ENCODE measurements at regions of chr14 and their contacts with region 1.

Region 1: GRCh38 chr14:35121887-35122695 is at the starts of genes PPP2R3C and PRORP:
- DNase-seq: peak; percentile 88
- H3K4me3 Mint-ChIP-seq: peak within 1 kb of the TSS; percentile 96
- H3K27ac Mint-ChIP-seq: peak within 1 kb of the TSS; percentile 100
- H3K4me1 Mint-ChIP-seq: peaks cover 41% of the 10 kb centered on the region
- H3K27me3 Mint-ChIP-seq: no peaks in the 10 kb centered on the region
- total RNA-seq, gene PPP2R3C: 48.1 and 49.7 TPM in 2 replicates
- total RNA-seq, gene PRORP: 37.0 and 41.3 TPM in 2 replicates

Region 2: GRCh38 chr14:34629657-34630529 is 492.2 kb before region 1 on chr14 and contains the start of gene SNX6:
- intact Hi-C with region 1: loop called (anchors 10 kb)
- DNase-seq: peak; percentile 78
- H3K4me3 Mint-ChIP-seq: peak within 1 kb of the TSS; percentile 95
- H3K27ac Mint-ChIP-seq: peak within 1 kb of the TSS; percentile 93
- H3K4me1 Mint-ChIP-seq: peaks cover 12% of the 10 kb centered on the region
- H3K27me3 Mint-ChIP-seq: peaks cover 10% of the 10 kb centered on the region
- total RNA-seq, gene SNX6: 66.6 and 67.0 TPM in 2 replicates

Region 3: DNA sequence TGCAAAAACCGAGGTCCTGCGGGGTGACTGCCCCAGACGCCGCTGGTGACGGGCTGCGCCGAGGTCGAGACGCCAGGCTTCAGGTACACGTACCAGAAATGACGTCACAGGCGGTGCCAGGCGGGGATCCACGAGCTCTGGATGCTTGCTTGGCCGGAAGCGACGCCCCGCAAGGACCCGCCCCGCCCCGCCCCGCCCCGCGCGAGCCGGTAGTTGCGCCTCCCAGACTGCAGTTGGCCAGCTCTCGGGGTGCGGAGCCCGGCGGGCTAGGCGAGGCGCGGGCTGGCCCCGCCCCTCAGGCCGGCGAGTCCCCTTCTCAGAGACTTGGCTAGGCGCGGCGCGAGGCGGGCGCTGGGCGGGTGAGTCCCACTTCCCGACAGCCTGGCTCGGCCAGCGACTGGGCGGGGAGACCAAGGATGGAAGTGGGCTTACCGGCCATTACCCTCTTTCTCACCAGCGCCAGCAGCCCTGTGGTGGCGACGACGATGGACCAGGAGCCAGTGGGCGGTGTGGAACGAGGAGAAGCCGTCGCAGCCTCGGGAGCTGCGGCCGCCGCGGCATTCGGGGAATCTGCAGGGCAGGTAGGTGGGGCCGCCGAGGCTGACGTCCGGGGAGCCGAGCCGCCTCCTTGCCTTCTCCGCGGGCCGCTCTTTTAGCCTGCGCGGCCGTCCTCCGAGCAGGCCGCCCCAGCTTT is 75.9 kb before region 1 on chr14 and contains the start of gene FAM177A1:
- intact Hi-C with region 1: loop called (anchors 1 kb)
- DNase-seq: peak; percentile 97
- H3K4me3 Mint-ChIP-seq: peak within 1 kb of the TSS; percentile 98
- H3K27ac Mint-ChIP-seq: peak within 1 kb of the TSS; percentile 98
- H3K4me1 Mint-ChIP-seq: peaks cover 21% of the 10 kb centered on the region
- H3K27me3 Mint-ChIP-seq: no peaks in the 10 kb centered on the region
- total RNA-seq, gene FAM177A1: 41.3 and 43.2 TPM in 2 replicates

Measured in activated T-helper 2 cell treated with anti-CD3 and anti-CD28 coated beads, Interferon-gamma antibody, Interleukin-2, Interleukin-4, amounts not matched to agents 10 μg/mL and 5 μg/mL and 100 μg/mL, durations not matched to agents 14 hours and 24 hours and 36 hours (primary cell).